Left cardiac atrium (tissue), 4 donors: ENCODE measurements at regions of chr19 and their contacts with region 1.

Region 1: GRCh38 chr19:38618590-38619360 is at the start of gene EIF3K:
- DNase-seq: peak; percentile 99
- ATAC-seq: peak; percentile 95
- total RNA-seq, gene EIF3K: 515 to 563 TPM

Region 2: DNA sequence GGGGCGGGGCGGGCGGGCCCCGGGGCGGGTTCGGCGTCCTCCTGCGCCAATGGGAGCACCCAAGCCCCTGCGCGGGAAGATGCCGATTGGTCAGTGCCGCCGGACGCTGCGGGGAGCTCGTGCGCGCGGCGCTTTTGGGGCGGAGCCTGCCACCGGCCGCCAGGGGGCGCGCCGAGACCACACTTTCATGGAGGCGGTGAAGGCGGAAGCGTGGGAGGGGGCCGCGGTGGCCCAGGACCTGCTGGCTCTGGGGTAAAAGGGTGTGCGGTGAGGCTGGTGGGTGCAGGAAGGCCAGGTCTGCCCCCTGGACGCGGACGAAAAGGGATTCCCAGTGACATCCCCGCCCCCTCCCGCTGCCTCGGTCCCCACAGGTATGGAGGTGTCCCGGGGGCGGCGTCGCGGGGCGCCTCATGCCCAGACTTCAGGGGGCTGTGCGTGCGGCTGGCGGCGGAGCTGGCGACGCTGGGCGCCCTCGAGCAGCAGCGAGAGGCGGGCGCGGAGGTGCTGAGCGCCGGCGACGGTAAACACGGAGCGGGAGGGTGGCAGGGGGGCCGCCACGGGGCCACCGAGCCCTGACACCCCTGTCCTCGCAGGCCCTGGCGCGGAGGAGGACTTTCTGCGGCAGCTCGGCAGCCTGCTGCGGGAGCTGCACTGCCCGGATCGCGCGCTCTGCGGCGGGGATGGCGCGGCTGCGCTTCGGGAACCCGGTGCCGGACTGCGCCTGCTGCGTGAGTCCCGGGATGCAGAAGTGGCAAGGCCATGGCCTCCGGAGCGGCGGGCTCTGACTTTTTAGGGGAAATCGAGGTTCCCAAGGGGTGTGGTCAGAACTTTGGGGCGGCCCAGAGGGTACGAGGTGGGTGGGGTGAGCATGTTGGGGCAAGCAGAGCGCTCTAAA is 215.6 kb before region 1 on chr19 and contains the start of gene FAM98C:
- intact Hi-C with region 1: loop called (anchors 10 kb)
- DNase-seq: peak; percentile 96
- ATAC-seq: peak; percentile 99 to 100
- total RNA-seq, gene FAM98C: 12.6 to 13.7 TPM

Region 3: DNA sequence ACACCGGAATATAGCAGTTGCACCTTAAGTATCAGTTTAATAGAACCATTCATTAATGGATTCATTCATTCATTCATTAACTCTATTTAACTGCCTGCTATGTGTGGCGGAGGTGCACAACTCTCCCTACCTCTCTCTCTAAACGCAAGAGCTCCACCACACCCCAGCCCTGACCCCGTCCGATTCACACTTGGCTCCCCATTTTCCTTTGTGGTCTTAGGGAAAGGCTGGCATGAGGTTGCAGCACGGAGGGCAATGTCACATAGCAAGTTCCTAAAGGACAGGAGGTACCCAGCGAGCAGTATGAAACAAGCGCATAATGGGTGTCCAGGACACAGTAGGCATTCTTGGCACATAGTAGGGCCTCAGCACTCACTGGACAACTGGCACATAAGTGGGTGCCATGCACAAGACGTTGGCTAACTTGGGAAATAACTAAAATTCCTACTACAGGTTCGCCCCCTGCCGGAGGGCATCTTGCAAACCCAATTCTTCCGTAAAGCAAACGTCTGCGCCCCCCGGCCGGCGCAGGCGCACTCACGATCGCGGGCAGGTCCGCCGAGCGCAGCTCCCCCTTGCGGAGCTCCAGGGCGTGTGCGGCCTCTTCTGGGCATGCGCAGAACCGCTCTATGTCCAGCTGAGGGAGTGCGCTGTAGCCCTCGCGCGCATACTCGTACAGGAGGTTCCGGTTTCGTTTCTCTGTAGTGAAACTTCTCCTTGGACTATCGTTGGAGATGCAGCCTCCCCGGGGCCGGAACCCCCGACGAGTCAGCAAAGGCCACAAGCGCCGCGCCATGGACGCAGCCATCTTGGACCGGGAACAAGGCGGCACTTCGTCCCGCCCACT is 311.4 kb after region 1 on chr19 and contains the start of gene SARS2:
- intact Hi-C with region 1: loop called in 1 of 2 experiments (anchors 10 kb)
- DNase-seq: peak; percentile 93
- ATAC-seq: peak; percentile 88 to 91
- total RNA-seq, gene SARS2: 9.5 to 17.7 TPM